OCI-LY7 (cell line): ENCODE measurements at regions of chr19 and their contacts with region 1.

Region 1: DNA sequence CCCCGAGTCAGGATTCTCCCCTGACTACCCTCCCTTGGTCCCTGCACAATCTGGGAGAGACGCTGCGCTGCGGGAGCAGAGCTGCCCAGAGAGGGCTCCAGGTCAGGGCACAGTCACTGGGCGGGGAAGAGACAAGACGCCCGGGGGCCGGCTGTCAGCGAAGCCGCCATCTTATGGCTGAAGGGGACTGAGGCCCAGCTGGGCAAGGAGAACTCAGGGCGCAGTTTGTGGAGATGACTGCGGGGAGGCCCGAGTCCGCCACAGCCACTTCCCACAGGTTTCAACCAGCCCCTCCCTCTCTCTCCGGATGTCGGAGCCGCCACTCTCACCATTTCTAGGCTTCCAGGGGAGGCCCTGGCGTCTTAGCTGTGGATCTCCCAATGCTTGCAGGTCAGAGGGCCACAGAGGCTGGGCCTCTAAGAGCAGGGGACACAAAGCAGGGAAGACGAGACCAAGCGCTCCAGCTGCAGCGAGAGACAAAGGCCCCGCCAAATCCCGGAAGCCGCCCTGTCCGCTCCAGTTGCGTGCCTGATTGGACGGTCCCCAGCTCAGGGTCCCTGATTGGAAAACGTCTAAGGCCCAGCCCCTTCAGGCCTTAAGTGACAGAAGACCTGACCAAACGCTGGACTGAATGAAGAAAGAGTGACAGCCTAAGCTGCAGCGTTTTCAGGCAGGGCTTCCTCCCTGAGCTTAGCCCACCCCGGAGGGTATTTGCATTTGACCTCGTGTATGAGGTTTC is at the start of gene ZNF724:
- DNase-seq: peak; percentile 99
- H3K4me3 ChIP-seq: peak within 1 kb of the TSS; percentile 99
- H3K27ac ChIP-seq: peak within 1 kb of the TSS; percentile 85
- H3K4me1 ChIP-seq: peaks cover 17% of the 10 kb centered on the region
- CTCF ChIP-seq: no peak
- total RNA-seq, gene ZNF724: 34.6 and 39.0 TPM in 2 replicates

Region 2: DNA sequence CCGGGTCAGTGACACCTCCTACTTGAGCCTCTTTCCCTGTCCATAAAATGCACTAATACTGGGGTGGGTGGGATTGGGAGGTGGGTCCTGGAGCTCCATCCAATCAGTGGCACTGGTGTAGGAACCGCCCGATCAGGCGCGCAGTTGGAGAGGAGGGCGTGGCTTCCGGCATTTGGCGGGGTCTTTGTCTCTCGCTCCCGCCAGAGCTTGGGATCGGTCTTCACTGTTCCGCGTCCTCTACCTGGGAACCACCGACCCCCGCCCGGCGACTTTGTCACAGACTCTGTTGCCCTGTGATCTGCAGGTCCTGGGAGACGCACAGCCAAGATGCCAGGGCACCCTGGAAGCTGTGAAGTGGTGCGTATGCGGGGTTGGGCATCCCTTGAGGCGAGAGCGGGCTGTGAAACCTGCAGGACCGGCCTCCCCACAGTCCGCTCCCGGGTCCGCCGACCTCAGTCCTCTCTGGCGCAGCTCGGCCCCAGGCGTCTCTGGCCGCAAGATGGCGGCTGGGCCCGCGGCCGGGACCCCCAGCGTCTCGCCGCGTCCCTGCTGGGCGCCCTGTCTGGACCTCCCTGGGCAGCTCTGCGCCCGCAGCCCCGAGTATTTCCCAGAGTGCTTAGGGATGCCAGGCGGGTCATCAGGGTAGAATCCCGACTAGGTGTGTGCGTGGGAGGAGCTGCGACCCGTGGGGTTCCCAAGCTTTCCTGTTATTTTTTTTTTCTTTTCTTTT is 174.9 kb before region 1 on chr19:
- CTCF ChIA-PET with region 1: no interaction called
- POLR2A ChIA-PET with region 1: interaction called, 7 read pairs
- intact Hi-C with region 1: loop called (anchors 10 kb)
- DNase-seq: peak; percentile 90
- H3K4me3 ChIP-seq: peak overlapping the region; percentile 97
- H3K27ac ChIP-seq: peak overlapping the region; percentile 70
- H3K4me1 ChIP-seq: peaks cover 14% of the 10 kb centered on the region
- CTCF ChIP-seq: no peak

Region 3: GRCh38 chr19:23116802-23117571 is 133.1 kb before region 1 on chr19 and contains the start of gene ZNF730:
- CTCF ChIA-PET with region 1: no interaction called
- POLR2A ChIA-PET with region 1: no interaction called
- intact Hi-C with region 1: loop called (anchors 10 kb)
- DNase-seq: peak; percentile 88
- H3K4me3 ChIP-seq: peak within 1 kb of the TSS; percentile 93
- H3K27ac ChIP-seq: peak within 1 kb of the TSS; percentile 81
- H3K4me1 ChIP-seq: peaks cover 15% of the 10 kb centered on the region
- CTCF ChIP-seq: no peak
- total RNA-seq, gene ZNF730: 19.6 and 36.2 TPM in 2 replicates

Region 4: DNA sequence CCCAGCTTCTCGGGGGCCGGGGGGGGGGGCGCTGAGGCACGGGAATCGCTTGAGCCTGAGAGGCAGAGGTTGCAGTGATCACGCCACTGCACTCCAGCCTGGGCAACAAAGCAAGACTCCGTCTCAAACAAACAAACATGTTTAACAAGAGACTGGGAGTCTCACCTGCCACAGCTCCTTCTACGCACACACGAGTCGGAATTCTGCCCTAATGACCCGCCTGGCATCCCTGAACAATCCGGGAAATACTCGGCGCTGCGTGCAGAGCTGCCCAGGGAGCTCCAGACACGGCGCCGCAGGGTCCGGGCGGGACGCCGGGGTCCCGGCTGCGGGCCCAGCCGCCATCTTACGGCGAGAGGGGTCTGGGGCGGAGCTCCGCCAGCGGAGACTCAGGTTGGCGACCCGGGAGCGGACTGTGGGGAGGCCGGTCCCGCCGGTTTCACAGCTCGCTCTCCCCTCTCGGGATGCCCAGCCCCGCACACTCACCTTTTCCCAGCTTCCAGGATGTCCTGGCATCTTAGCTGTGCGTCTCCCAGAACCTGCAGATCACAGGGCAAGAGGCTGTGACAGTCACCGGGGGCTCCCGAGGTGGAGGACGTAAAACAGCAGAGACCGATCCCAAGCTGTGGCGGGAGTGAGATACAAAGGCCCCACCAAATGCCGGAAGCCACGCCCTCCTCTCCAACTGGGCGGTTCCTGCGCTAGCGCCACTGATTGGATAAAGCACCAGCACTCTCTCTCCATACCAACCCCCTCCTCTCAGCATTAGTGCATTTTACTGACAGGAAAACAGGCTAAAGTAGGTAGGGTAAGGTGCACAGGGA is 23.7 kb after region 1 on chr19:
- CTCF ChIA-PET with region 1: no interaction called
- POLR2A ChIA-PET with region 1: interaction called, 10 read pairs
- intact Hi-C with region 1: no loop called
- DNase-seq: peak; percentile 94
- H3K4me3 ChIP-seq: peak overlapping the region; percentile 92
- H3K27ac ChIP-seq: peak overlapping the region; percentile 82
- H3K4me1 ChIP-seq: peaks cover 10% of the 10 kb centered on the region
- CTCF ChIP-seq: peak; percentile 67